ENCODE measurements at regions of chr17 and their contacts with region 1.

Region 1: DNA sequence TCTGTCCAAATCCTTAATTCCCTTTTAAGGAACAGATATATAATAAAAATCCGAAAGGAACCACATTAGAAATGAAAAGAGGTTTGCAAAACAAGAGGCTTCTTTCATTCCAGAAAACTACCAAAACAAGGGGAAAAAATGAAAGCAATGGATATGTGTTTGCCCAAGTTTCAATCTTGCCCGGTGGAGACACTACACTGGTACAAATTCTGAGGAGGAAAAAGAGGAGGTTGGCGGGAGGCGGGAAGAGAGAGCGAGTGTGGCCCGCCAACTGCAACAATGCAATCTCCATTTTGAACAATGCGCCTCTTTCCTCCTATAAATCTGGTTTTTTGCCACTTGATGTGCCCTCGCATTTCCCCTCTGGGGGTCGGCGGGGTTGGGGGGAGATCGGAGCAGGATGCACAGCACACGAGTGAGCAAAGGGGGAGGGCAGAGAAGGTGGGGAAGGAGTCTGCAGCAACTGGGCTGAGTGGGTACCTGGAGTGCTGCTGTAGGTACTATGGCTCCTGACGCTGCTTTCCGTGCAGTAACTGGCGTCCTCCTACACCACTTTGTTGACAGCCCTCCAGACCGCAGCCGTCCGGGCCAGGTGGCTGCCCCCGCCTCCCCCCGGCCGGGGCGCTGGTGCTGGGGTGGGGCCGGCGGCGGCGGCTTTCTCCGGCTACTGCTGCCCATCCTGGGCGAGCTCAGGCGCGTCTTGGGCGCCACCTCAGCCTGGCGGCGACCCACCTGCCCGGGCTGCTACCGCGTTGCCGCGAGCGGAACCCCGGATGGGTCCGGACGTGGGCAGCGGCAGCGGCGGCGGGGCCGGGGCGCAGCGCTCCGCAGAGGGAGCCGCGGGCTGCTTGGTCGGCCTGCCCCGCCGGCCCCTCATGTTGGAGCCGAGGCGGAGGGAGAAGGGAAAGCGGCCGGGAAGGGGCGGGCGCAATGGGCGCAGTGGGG is 93.8 kb upstream of the PLEKHM1 start:
- DNase-seq: peak; percentile 89

Region 2: GRCh38 chr17:45110668-45111611 is 473.4 kb before region 1 on chr17:
- in situ Hi-C with region 1: no loop called
- DNase-seq: no peak

Region 3: DNA sequence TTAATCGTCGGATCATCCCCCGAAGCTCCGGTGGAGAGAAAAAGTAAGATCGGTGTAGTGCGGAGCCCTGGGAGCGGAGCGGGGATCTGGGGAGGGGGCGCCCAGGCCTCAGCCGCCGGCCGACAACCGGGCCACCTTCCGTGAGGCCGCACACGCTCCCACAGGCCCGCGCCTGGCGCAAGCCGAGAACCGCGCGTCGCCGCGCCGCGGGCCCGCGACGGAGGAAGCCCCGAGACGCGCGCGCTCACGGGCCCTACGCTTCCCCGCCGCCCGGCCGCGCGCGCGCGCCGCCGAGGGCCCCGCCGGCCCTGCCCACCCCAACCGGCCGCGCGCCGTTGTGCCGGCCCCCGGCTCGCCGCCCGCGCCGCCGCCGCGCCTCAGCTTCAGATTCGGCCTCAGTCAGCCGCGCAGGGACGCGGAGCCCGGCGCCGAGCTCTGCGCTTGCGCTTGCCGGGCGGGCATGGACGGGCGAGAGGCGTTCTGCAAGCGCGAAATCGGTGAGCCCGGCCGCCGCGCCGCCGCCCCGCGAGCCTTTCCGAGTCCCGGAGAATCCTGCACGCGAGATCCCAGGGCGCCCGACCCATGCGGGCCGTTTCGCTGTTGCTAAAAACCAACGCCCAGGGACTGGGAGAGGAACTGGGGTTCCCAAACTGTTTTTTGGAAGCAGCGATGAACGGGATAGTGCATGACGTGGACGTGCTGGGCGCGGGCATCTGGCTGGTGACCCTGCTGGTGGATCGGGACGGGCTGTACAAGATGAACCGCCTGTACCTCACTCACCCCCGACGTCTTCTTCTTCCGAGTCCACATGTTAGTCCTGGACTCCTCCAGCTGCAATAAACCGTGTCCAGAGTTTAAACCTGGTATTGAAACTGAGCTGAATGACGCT is 682.5 kb after region 1 on chr17:
- in situ Hi-C with region 1: loop called (anchors 25 kb)
- DNase-seq: peak; percentile 81